Psoas muscle (tissue), 8 donors: ENCODE measurements at regions of chr3 and their contacts with region 1.

Region 1: GRCh38 chr3:40329071-40329470 is 19.6 kb downstream of the EIF1B start:
- DNase-seq: no peak
- ATAC-seq: no peak
- H3K4me3 ChIP-seq: no peak overlapping the region
- H3K27ac ChIP-seq: no peak overlapping the region
- H3K4me1 ChIP-seq: no peaks in the 10 kb centered on the region
- H3K27me3 ChIP-seq: no peaks in the 10 kb centered on the region
- CTCF ChIP-seq: no peak

Region 2: GRCh38 chr3:39783680-39784079 is 545.4 kb before region 1 on chr3:
- intact Hi-C with region 1: no loop called
- DNase-seq: no peak
- ATAC-seq: peak in 1 of 4 donors; percentile 13
- H3K4me3 ChIP-seq: no peak overlapping the region
- H3K27ac ChIP-seq: no peak overlapping the region
- H3K4me1 ChIP-seq: no peaks in the 10 kb centered on the region
- H3K27me3 ChIP-seq: peaks cover 0 to 3% (median 0%) of the 10 kb centered on the region in 3 donors
- CTCF ChIP-seq: no peak

Region 3: DNA sequence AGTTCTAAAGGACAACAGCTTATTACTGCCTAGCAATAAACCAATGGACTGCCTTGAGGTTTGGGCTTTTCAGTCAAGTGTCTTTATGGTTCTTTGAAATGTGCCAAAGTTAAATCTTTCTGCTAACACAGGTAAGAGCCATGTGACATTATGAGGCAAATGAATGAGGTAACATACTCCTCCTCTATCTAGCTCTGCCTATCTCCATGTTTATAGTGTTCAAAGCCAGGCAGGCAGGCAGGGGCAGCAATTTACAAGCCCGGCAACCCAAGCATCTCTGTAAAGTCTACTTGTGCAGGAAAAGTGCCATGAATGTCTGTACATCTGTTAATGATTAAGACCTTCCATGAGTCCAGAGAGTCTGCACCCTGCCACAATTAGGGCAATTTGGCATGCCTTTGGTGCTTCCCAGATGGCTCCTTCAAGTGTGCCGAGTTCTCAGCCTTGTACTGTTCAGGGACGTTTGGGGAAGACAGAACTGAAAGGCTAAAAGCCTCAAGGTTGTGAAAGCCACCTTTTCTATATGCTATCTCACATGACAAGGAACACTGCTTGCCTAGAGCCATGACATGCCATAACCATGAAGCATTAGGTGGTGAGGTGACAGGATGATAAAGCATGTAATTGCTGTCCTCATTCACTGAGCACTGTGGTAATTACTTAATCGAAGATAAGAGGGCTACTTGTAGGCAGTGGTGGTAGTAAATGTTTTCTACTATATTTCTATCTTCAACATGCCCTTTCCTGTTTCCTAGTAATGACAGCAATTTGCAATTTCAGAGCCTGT is 60.9 kb before region 1 on chr3:
- intact Hi-C with region 1: no loop called
- DNase-seq: no peak
- ATAC-seq: no peak
- H3K4me3 ChIP-seq: no peak overlapping the region
- H3K27ac ChIP-seq: no peak overlapping the region
- H3K4me1 ChIP-seq: no peaks in the 10 kb centered on the region
- H3K27me3 ChIP-seq: no peaks in the 10 kb centered on the region
- CTCF ChIP-seq: no peak

Region 4: GRCh38 chr3:40524568-40525285 is 195.7 kb after region 1 on chr3 and contains the start of gene ZNF621:
- intact Hi-C with region 1: loop called in 1 of 2 experiments (anchors 5 kb)
- DNase-seq: peak; percentile 93 to 96
- ATAC-seq: peak; percentile 99 to 100 (median 100)
- H3K4me3 ChIP-seq: peak within 1 kb of the TSS; percentile 91
- H3K27ac ChIP-seq: peak within 1 kb of the TSS; percentile 92
- H3K4me1 ChIP-seq: peaks cover 3% of the 10 kb centered on the region
- H3K27me3 ChIP-seq: no peaks in the 10 kb centered on the region
- CTCF ChIP-seq: no peak
- total RNA-seq, gene ZNF621: 8.8 to 9.8 (median 9.1) TPM

Region 5: GRCh38 chr3:41881233-41881821 is 1552.3 kb after region 1 on chr3:
- intact Hi-C with region 1: loop called (anchors 2 to 5 kb)
- DNase-seq: no peak
- ATAC-seq: peak in 1 of 4 donors; percentile 60
- H3K4me3 ChIP-seq: no peak overlapping the region
- H3K27ac ChIP-seq: no peak overlapping the region
- H3K4me1 ChIP-seq: no peaks in the 10 kb centered on the region
- H3K27me3 ChIP-seq: no peaks in the 10 kb centered on the region
- CTCF ChIP-seq: peak; percentile 75